Naive thymus-derived CD4-positive, alpha-beta T cell (primary cell): ENCODE measurements at regions of chr7 and their contacts with region 1.

Region 1: DNA sequence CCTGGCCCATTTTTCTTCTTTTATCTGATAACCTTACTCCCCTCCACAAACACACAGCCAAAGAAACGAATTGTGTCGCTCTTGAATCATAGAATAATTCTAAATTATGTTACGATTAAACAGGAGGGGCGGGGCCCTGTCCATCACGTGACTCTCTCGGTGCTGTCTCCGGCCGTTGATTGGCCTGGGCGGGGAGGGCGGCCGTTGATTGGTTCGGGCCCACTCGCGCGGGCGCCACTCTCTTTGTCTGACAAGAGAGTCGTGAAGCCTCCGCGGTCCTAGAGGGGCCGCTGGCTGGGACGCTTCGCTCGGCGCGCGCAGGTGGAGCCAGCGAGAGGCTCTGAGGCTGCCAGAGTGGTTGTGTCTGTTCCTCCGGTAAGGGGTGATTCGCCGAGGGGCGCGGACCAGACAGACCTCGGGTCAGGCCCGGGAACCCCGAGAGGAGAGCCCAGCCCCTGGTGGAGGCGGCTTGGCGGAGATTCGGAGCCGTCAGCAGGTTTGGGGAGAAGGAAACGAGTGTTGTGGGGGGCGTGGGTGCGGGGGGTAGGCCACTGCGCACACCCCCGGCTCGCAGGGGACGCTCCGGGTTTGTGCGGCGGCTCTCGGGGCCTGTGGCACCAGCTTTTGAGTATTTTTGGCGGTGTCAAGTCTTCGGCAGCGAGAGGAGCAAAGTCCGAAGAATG is at the start of gene ZNF789:
- DNase-seq: peak; percentile 90 to 98 (median 95)
- ATAC-seq: peak; percentile 99
- H3K4me3 ChIP-seq: peak within 1 kb of the TSS; percentile 86
- H3K4me3 Mint-ChIP-seq: peak within 1 kb of the TSS; percentile 94 to 99 (median 98)
- H3K27ac ChIP-seq: peak within 1 kb of the TSS; percentile 82
- H3K27ac Mint-ChIP-seq: peak within 1 kb of the TSS; percentile 87 to 98 (median 95)
- H3K4me1 ChIP-seq: peaks cover 8 to 15% of the 10 kb centered on the region in 2 donors
- H3K4me1 Mint-ChIP-seq: peaks cover 23 to 48% (median 35%) of the 10 kb centered on the region in 7 donors
- H3K27me3 ChIP-seq: no peaks in the 10 kb centered on the region
- H3K27me3 Mint-ChIP-seq: peaks cover 0 to 5% (median 0%) of the 10 kb centered on the region in 5 donors
- total RNA-seq, gene ZNF789: 17.4 to 28.0 (median 27.3) TPM

Region 2: DNA sequence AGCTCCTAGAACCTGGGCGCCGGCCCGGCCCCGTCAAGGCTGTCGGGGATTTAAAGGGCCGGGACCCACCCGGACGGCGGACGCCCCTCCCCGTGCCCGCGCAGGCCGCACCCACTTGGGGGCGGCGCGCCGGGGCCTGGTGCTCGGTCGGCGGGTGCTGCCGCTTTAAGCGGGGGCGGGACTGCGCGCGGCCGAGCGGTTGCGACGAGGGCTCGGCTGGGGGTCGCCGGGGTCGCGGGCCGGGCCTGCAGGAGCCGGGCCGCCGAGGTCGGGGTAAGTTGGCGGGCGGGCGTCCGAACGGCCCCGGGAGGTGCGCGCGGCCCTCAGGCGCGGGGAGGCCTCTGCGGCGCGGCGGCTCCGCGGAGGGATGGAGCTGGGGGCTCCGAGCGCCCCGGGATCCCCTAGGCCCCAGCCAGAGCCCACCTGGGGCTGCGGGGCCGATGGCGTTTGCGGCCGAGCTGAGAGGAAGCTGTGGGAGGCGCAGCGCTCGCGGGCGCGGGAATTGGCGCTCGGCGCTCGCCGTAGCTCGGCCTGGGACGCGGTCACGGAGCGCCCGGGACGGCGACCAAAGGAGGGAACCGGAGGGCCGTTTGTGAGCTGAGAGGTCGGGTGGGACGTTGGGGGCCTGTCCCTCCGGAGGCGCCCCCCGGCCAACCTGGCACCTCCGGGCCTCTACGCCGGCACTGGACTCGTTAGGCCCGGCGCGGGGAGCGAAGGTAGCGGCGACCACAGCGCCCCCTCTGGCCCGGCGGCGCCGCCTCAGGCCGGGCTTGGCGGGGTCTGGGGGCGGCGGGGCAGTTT is 594.1 kb before region 1 on chr7 and contains the start of gene TRRAP:
- CTCF ChIA-PET with region 1: no interaction called
- POLR2A ChIA-PET with region 1: no interaction called
- intact Hi-C with region 1: loop called in 1 of 2 experiments (anchors 10 kb)
- DNase-seq: peak; percentile 63 to 87 (median 82)
- ATAC-seq: peak; percentile 82
- H3K4me3 ChIP-seq: peak within 1 kb of the TSS; percentile 95
- H3K4me3 Mint-ChIP-seq: peak within 1 kb of the TSS; percentile 90 to 99 (median 95)
- H3K27ac ChIP-seq: peak within 1 kb of the TSS; percentile 88
- H3K27ac Mint-ChIP-seq: peak within 1 kb of the TSS; percentile 87 to 98 (median 94)
- H3K4me1 ChIP-seq: peaks cover 9 to 14% of the 10 kb centered on the region in 2 donors
- H3K4me1 Mint-ChIP-seq: peaks cover 0 to 37% (median 26%) of the 10 kb centered on the region in 7 donors
- H3K27me3 ChIP-seq: no peaks in the 10 kb centered on the region
- H3K27me3 Mint-ChIP-seq: peaks cover 0 to 3% (median 0%) of the 10 kb centered on the region in 5 donors
- total RNA-seq, gene TRRAP: 59.1 to 72.3 (median 66.8) TPM

Region 3: DNA sequence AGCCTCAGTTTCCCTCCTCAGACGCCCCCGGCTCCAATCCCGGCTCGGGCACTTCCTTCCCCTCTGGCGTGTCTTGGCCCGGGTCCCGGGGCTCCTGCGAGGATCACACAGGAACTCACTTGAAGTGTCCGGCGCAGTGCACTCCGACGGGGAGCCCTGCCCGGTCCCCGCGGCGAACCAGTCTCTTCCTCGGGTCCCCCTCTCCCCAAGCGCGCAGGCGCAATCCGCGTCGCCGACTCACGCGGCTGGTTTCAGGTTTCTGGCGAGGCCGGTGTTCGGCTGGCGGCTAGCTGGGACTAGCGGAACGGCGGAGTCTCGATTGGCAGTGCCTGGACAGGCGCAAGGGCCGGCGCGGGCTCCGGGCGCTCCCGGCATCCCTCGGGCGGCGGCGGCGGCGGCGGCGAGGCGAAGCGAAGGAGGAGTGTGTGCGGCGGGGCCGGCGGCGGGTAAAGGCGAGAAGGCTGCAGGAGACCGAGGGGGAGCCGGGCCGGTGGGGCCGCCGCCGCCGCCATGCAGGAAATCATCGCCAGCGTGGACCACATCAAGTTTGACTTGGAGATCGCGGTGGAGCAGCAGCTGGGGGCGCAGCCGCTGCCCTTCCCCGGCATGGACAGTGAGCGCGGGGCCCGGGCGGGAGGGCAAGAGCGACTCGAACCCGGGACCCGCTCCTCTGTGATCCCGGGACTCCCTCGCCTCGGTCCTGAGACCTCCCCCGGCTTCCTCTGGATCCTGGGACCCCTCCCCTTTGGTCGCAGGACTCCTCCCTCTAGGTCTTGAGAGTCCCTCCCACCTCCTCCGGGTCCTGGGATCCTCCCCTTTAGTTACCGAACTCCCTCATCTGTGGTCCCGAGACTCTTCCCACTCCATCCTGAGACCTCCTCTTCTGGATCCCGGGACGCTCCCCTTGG is 33.9 kb before region 1 on chr7 and contains the starts of genes CPSF4 and PTCD1:
- CTCF ChIA-PET with region 1: no interaction called
- POLR2A ChIA-PET with region 1: interaction called, 3 read pairs
- intact Hi-C with region 1: loop called (anchors 1 kb)
- DNase-seq: peak; percentile 71 to 92 (median 77)
- ATAC-seq: peak; percentile 95
- H3K4me3 ChIP-seq: peak within 1 kb of the TSS; percentile 93
- H3K4me3 Mint-ChIP-seq: peak within 1 kb of the TSS; percentile 92 to 100 (median 98)
- H3K27ac ChIP-seq: peak within 1 kb of the TSS; percentile 81
- H3K27ac Mint-ChIP-seq: peak within 1 kb of the TSS; percentile 85 to 95 (median 94)
- H3K4me1 ChIP-seq: peaks cover 10 to 11% of the 10 kb centered on the region in 2 donors
- H3K4me1 Mint-ChIP-seq: peaks cover 18 to 40% (median 31%) of the 10 kb centered on the region in 7 donors
- H3K27me3 ChIP-seq: no peaks in the 10 kb centered on the region
- H3K27me3 Mint-ChIP-seq: no peaks in the 10 kb centered on the region
- total RNA-seq, gene CPSF4: 36.3 to 69.4 (median 45.7) TPM
- total RNA-seq, gene PTCD1: 4.0 to 10.8 (median 8.8) TPM

Region 4: DNA sequence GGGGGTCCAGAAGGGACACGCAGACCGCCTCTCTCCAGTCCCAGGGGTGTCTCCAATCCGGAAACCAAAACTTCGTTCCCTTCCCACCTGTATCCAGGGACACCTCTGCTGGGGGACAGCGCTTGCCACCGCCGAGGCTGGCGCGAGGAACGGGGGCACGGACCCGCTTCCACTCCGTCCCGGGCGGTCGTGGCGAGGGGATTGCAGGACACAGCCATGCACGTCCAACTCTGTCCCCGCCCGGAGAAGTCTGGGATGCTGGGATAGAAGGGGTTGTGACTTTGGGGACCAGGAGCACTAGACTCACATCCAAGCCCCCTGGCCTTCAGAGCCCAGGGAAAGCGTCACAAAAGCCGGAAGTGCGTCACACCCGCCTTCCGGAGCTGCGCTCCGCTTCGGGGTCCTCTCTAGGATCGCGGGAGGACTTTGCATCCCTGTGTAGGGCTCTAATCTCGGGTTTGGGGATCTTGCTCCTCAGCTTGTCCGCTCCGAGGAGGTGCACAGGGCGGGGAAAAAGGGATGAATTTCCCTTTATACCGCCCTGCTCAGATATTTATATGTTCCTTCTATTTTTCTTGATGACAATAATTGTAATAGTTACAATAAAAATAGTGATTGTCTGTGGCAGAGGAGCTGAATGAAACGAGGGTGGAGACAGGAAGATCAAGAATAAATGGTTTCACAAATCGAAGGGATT is 79.2 kb after region 1 on chr7 and contains the start of gene FAM200A:
- CTCF ChIA-PET with region 1: no interaction called
- POLR2A ChIA-PET with region 1: interaction called, 6 read pairs
- intact Hi-C with region 1: loop called in 1 of 2 experiments (anchors 1 kb)
- DNase-seq: peak; percentile 62 to 88 (median 83)
- ATAC-seq: peak; percentile 99
- H3K4me3 ChIP-seq: peak within 1 kb of the TSS; percentile 93
- H3K4me3 Mint-ChIP-seq: peak within 1 kb of the TSS; percentile 85 to 95 (median 90)
- H3K27ac ChIP-seq: peak within 1 kb of the TSS; percentile 95
- H3K27ac Mint-ChIP-seq: peak within 1 kb of the TSS; percentile 73 to 98 (median 95)
- H3K4me1 ChIP-seq: peaks cover 17 to 23% of the 10 kb centered on the region in 2 donors
- H3K4me1 Mint-ChIP-seq: peaks cover 23 to 62% (median 48%) of the 10 kb centered on the region in 7 donors
- H3K27me3 ChIP-seq: no peaks in the 10 kb centered on the region
- H3K27me3 Mint-ChIP-seq: no peaks in the 10 kb centered on the region
- total RNA-seq, gene FAM200A: 1.9 to 13.6 (median 5.0) TPM

Region 5: DNA sequence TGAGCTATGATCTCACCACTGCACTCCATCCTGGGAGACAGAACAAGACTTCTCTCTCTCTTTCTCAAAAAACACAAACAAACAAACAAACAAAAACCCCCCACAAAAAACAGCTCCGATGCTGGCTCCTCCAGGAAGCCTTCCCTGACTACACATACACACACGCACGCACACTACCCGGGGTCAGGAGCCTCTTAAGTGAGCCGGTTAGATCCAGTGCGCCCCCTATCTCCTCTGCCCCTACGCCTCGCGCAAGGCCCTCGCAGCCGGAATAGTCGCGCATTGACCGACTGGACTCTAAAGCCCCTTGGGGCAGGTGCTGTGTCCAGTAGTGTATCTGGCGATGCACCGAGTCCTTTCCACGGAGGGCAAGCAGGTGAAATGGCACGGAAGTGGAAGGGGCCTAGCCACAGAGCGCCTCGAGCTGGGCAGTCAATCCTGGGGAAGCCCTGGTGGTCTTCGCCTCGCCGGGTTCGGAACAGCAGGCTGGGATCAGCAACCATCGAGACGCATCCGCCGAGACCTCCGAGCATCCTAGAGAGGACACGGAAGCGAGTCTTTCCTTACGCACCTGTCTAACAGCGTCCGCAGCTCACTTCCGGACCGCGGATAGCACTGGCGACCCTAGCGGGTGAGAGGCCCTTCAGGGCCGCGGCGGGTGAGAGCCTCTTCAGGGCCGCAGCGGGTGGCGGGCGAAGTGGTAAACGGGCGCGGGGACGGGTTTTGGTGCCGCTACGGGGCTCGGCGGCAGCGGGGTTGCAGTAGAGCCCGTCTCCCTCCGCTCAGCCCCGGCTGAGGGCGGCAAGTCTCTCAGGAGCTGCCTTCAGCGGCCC is 143.9 kb after region 1 on chr7 and contains the start of gene ZSCAN25:
- CTCF ChIA-PET with region 1: no interaction called
- POLR2A ChIA-PET with region 1: interaction called, 3 read pairs
- intact Hi-C with region 1: loop called in 1 of 2 experiments (anchors 1 kb)
- DNase-seq: peak; percentile 65 to 88 (median 85)
- ATAC-seq: peak; percentile 99
- H3K4me3 ChIP-seq: peak within 1 kb of the TSS; percentile 83
- H3K4me3 Mint-ChIP-seq: peak within 1 kb of the TSS; percentile 94 to 99 (median 98)
- H3K27ac ChIP-seq: peak within 1 kb of the TSS; percentile 90
- H3K27ac Mint-ChIP-seq: peak within 1 kb of the TSS; percentile 88 to 99 (median 97)
- H3K4me1 ChIP-seq: peaks cover 12 to 14% of the 10 kb centered on the region in 2 donors
- H3K4me1 Mint-ChIP-seq: peaks cover 30 to 55% (median 48%) of the 10 kb centered on the region in 7 donors
- H3K27me3 ChIP-seq: no peaks in the 10 kb centered on the region
- H3K27me3 Mint-ChIP-seq: peaks cover 0 to 4% (median 0%) of the 10 kb centered on the region in 5 donors
- total RNA-seq, gene ZSCAN25: 33.9 to 51.6 (median 43.8) TPM